Activated naive CD4-positive, alpha-beta T cell treated with anti-CD3 and anti-CD28 coated beads, Interleukin-2, amount 10 ng/mL, durations not matched to agents 7 days and 5 days (primary cell): ENCODE measurements at regions of chr18 and their contacts with region 1.

Region 1: DNA sequence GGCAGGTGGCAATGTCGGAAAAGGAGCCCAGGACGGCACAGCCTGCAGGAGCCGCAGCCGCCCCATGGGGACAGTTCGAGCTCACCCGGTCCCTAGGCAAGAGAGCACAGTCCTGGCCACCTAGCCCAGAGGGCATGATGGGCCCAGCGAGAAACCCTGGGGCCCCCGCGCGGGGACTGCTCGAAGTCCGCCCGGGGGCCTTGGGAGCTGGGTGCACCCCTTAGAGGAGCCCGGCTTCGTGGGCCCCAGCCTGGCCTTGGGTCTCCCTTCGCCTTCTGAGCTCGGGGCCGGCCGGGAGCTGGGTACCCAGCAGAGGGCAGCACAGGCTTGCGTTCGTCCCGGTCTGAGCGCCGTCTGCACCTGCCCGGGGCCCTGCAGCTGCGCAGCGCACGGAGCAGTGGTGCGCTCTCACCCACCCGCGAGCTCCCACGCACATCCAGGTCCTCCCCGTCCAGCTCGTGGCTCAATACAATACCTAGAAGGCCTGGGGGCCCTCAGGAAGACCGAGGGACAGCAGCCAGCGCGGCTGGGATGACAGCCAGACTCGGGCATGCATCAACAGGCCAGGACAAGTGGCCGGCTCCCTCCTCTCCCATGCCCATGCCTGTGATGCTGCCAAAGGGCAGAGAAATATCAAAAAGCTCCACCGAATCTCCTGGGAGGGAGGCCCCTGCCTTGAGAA is 96.2 kb upstream of the ZNF532 start:
- DNase-seq: peak; percentile 81
- H3K4me3 Mint-ChIP-seq: no peak overlapping the region
- H3K27ac Mint-ChIP-seq: no peak overlapping the region
- H3K4me1 Mint-ChIP-seq: peaks cover 20% of the 10 kb centered on the region
- H3K27me3 Mint-ChIP-seq: peaks cover 83% of the 10 kb centered on the region

Region 2: GRCh38 chr18:58520969-58521368 is 247.5 kb before region 1 on chr18:
- CTCF ChIA-PET with region 1: interaction called, 351 read pairs
- DNase-seq: no peak
- H3K4me3 Mint-ChIP-seq: no peak overlapping the region
- H3K27ac Mint-ChIP-seq: no peak overlapping the region
- H3K4me1 Mint-ChIP-seq: peaks cover 10% of the 10 kb centered on the region
- H3K27me3 Mint-ChIP-seq: peaks cover 24% of the 10 kb centered on the region

Region 3: GRCh38 chr18:58541789-58542425 is 226.5 kb before region 1 on chr18:
- CTCF ChIA-PET with region 1: interaction called, 351 read pairs
- DNase-seq: peak; percentile 50
- H3K4me3 Mint-ChIP-seq: no peak overlapping the region
- H3K27ac Mint-ChIP-seq: no peak overlapping the region
- H3K4me1 Mint-ChIP-seq: peaks cover 59% of the 10 kb centered on the region
- H3K27me3 Mint-ChIP-seq: peaks cover 4% of the 10 kb centered on the region

Region 4: GRCh38 chr18:58928386-58928785 is 160.0 kb after region 1 on chr18:
- CTCF ChIA-PET with region 1: no interaction called
- DNase-seq: no peak
- H3K4me3 Mint-ChIP-seq: no peak overlapping the region
- H3K27ac Mint-ChIP-seq: no peak overlapping the region
- H3K4me1 Mint-ChIP-seq: no peaks in the 10 kb centered on the region
- H3K27me3 Mint-ChIP-seq: peaks cover 10% of the 10 kb centered on the region

Region 5: DNA sequence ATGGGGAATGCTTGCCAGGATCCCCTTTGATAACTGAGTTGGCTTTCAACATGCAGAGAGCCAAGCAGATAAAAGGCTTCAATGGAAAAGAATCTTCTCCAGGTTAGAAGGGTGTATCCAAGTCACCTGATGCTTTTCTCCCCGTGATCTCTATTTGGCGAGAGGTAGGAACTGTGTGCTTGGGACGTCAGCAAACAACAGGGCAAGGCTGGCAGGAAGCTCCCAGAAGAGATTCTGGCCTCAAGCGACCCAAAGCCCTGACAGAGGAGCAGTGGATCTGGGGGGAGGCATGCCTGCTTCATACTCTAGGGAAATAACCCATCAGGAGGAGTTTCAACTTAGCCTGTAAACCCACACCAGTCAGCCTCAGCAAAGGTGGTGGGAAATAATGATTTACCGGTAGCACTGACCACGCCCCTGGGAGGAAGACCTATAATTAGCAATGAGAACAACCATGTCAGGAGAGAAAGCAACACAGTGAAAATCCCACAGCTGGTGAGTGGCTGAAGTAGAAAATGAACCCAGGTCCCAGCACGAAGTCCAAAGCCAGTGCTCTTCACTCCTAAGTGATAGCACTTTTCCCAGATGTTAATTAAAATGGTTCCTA is 295.0 kb after region 1 on chr18:
- CTCF ChIA-PET with region 1: interaction called, 58 read pairs
- DNase-seq: no peak
- H3K4me3 Mint-ChIP-seq: no peak overlapping the region
- H3K27ac Mint-ChIP-seq: no peak overlapping the region
- H3K4me1 Mint-ChIP-seq: peaks cover 2% of the 10 kb centered on the region
- H3K27me3 Mint-ChIP-seq: peaks cover 24% of the 10 kb centered on the region

Region 6: DNA sequence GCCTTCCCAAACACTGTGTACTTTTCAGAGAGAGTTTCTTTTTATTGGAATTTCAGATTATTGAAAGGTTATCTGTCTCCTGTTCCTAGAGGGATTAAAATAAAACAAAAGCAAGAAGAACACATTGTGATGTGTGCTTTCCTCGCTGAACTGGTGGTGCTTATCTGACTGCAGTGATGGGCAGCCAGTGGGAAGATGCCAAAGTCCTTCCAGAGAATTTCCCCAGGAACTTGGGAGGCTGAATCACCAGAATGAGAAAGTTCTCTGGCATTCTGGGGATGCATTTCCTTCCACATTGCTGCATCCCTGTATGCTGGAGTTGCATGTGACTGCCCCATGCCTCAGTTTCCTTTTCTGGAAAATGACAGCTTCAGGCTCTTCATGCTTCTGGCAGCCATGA is 317.4 kb after region 1 on chr18:
- CTCF ChIA-PET with region 1: interaction called, 15 read pairs
- DNase-seq: no peak
- H3K4me3 Mint-ChIP-seq: no peak overlapping the region
- H3K27ac Mint-ChIP-seq: no peak overlapping the region
- H3K4me1 Mint-ChIP-seq: no peaks in the 10 kb centered on the region
- H3K27me3 Mint-ChIP-seq: peaks cover 41% of the 10 kb centered on the region